ENCODE measurements at regions of chr4 and their contacts with region 1.

Region 1: GRCh38 chr4:55008166-55009070 is 117.0 kb downstream of the KDR start:
- DNase-seq: no peak
- H3K4me3 ChIP-seq: no peak overlapping the region
- H3K27ac ChIP-seq: no peak overlapping the region
- H3K4me1 ChIP-seq: no peaks in the 10 kb centered on the region
- H3K27me3 ChIP-seq: no peaks in the 10 kb centered on the region
- CTCF ChIP-seq: no peak
- POLR2A ChIP-seq: no peak

Region 2: DNA sequence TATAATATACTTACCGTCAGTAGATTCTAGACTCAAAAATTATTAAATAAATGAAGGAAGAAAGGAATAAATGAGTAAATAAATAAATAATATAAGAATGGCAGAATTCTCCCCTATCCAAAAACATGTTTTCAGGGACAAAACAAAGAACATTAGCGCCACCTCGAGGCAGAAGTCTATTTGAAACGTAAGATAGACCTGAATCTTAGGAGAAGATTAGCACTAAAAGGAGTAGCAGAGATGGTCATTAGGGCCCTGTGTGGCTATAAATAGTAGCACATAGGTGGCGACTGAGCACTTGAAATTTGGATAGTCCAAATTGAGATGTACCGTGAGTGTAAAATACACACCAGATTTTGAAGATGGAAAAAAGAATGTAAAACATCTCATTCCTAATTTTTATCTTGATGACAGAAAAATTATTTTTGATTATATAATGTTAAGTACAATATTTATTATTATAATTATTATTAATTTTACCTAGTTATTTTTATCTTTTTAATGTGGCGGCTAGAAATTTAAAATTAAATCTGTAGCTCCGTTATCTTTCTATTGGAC is 313.4 kb after region 1 on chr4:
- intact Hi-C with region 1: loop called (anchors 10 kb)
- DNase-seq: no peak
- H3K4me3 ChIP-seq: no peak overlapping the region
- H3K27ac ChIP-seq: no peak overlapping the region
- H3K4me1 ChIP-seq: peaks cover 10% of the 10 kb centered on the region
- H3K27me3 ChIP-seq: no peaks in the 10 kb centered on the region
- CTCF ChIP-seq: peak; percentile 5 to 66 (median 39)
- POLR2A ChIP-seq: no peak

Region 3: DNA sequence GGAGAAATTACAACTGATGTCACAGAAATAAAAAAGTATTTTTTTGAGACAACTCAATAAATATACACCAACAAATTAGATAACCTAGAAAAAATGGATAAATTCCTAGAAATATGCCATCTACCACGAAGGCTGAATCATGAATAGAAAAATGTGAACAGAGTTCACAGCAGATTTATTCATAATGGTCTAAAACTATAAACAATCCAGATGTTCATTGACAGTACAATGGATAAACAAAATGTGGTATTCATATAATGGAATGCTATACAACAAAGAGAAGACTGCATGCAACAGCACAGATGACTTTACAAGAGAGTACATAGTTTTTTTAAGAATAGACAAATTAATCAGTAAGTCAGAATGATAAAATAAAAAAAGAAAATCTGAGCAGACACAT is 483.1 kb after region 1 on chr4:
- intact Hi-C with region 1: no loop called
- DNase-seq: no peak
- H3K4me3 ChIP-seq: no peak overlapping the region
- H3K27ac ChIP-seq: no peak overlapping the region
- H3K4me1 ChIP-seq: no peaks in the 10 kb centered on the region
- H3K27me3 ChIP-seq: no peaks in the 10 kb centered on the region
- CTCF ChIP-seq: no peak
- POLR2A ChIP-seq: no peak